ENCODE measurements at regions of chr11 and their contacts with region 1.

Region 1: DNA sequence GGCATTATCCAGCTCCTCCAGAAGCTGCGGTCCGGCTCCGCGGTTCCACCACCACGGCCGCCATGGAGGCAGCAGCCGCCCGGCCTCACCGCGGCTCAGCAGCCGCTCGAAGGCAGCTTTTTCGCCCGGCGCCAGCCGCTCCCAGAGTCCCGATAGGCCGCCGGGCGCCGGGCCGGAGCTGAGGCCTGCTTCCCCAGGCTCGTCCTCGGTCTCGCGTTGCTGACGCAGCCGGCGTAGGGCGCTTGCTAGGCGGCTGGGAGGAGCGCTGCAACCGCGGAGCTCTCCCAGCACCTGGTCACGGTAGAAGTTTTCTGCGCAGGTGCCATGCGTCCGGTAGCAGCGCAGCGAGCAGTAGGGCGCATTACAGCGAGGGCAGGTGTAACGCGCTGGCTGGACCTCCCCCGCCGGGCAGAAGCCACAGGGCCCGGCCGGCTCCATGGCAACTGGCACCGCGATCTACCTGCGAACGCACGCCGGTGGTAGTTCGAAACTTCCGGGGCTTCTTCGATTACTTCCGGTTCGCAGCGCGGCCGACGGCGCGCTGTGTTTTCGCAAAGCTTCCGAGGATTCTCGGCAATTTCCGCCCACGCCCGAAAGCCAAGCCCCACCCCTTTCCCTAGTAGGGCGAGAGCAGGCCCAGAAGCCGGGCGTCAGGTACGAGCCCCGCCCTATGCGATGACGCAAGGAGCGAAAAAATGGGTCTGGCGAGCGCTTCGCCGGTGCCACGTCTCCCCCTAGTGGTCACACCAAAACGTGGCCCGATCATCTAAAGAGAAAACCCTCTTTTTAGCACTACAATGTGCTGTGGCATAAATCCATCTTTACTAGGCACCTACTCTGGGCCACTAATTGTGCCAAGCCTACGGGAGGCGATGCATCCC is at the start of gene ZNHIT2:
- DNase-seq: peak; percentile 96 to 100 (median 100)
- ATAC-seq: peak; percentile 60 to 66
- H3K4me3 Mint-ChIP-seq: peak within 1 kb of the TSS; percentile 87 to 94 (median 90)
- H3K27ac Mint-ChIP-seq: peak within 1 kb of the TSS; percentile 82 to 99 (median 97)
- H3K4me1 Mint-ChIP-seq: peaks cover 24 to 71% (median 51%) of the 10 kb centered on the region in 4 donors
- H3K27me3 Mint-ChIP-seq: no peaks in the 10 kb centered on the region
- polyA plus RNA-seq, gene ZNHIT2: 24.3 to 33.1 (median 29.8) TPM

Region 2: DNA sequence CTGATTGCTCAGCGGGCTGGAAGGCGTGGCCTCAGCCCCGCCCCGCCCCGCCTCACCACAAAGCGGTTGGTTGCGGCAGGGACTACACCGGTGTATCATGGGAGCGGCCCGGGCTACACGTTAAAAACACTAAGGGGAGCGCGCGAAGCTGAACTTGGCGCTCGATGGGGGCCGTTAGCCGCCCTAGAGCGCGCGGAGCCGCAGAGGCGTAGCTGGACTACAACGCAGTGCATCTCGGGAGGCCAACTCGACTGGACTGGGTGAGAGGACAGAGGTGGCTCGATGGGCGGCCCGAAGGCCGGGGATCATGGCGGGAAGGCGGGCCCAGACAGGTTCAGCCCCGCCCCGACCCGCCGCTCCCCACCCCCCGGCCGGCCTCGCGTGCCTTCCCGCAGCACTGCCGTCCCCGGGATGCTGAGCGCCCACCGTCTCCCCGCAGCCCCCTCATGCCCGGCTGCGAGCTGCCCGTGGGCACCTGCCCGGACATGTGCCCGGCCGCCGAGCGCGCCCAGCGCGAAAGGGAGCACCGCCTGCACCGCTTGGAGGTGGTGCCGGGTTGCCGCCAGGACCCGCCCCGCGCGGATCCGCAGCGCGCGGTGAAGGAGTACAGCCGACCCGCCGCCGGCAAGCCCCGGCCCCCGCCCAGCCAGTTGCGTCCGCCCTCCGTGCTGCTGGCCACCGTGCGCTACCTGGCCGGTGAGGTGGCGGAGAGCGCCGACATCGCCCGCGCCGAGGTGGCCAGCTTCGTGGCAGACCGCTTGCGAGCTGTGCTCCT is 76.4 kb before region 1 on chr11 and contains the start of gene SAC3D1:
- POLR2A ChIA-PET with region 1: interaction called, 12 read pairs
- DNase-seq: peak; percentile 75 to 92 (median 85)
- ATAC-seq: peak; percentile 91 to 92
- H3K4me3 Mint-ChIP-seq: peak within 1 kb of the TSS; percentile 90 to 96 (median 93)
- H3K27ac Mint-ChIP-seq: peak within 1 kb of the TSS; percentile 78 to 95 (median 92)
- H3K4me1 Mint-ChIP-seq: peaks cover 5 to 27% (median 19%) of the 10 kb centered on the region in 4 donors
- H3K27me3 Mint-ChIP-seq: no peaks in the 10 kb centered on the region
- polyA plus RNA-seq, gene SAC3D1: 6.7 to 13.9 (median 10.7) TPM

Region 3: GRCh38 chr11:65095974-65096806 is 21.3 kb before region 1 on chr11 and contains the start of gene VPS51:
- POLR2A ChIA-PET with region 1: interaction called, 115 read pairs
- DNase-seq: peak; percentile 65 to 93 (median 87)
- ATAC-seq: peak; percentile 88 to 90
- H3K4me3 Mint-ChIP-seq: peak within 1 kb of the TSS; percentile 77 to 96 (median 90)
- H3K27ac Mint-ChIP-seq: peak within 1 kb of the TSS; percentile 88 to 98 (median 96)
- H3K4me1 Mint-ChIP-seq: peaks cover 5 to 25% (median 13%) of the 10 kb centered on the region in 4 donors
- H3K27me3 Mint-ChIP-seq: no peaks in the 10 kb centered on the region
- polyA plus RNA-seq, gene VPS51: 70.2 to 111 (median 106) TPM

Region 4: GRCh38 chr11:65169164-65169641 is 51.7 kb after region 1 on chr11:
- POLR2A ChIA-PET with region 1: no interaction called
- DNase-seq: no peak
- ATAC-seq: no peak
- H3K4me3 Mint-ChIP-seq: no peak overlapping the region
- H3K27ac Mint-ChIP-seq: peak overlapping the region in 5 of 10 donors; percentile 47 to 71 (median 63)
- H3K4me1 Mint-ChIP-seq: peaks cover 0 to 10% (median under 1%) of the 10 kb centered on the region in 4 donors
- H3K27me3 Mint-ChIP-seq: no peaks in the 10 kb centered on the region

Region 5: DNA sequence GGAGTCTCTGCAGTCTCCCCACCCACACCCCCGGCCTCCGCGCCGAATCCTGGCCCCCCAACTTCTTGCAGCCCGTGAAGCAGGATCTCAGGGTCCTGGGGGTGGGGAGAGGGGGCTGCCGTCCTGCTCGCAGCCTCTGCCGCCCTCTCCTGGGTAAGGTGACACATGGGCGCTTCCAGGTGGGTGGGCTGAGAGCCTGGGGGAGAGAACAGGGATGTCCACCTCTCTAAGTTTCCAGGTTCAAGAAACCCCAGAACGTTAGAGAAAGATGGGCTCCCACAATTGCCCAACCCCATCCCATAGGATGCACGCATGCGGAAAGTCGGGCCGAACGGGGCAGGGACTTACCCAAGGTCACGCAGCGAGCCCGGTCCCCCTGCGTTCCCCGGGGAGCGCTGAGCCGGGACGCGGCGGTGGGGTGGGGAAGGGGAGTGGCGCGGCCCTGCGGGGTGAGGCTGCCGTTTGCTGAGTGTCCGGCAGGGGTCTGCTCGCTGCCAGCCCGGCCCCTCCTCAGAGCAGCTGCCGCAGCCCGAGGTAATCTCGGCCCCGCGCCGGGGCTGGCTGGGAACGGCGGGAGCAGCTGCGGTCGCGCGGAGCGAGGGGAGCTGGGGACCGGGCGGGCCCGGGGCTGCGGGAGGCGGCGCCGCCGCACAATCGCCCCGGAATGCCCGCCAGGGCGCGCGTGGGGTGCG is 63.6 kb after region 1 on chr11:
- POLR2A ChIA-PET with region 1: interaction called, 22 read pairs
- DNase-seq: peak; percentile 36 to 77 (median 55)
- ATAC-seq: peak; percentile 75 to 82
- H3K4me3 Mint-ChIP-seq: peak overlapping the region; percentile 85 to 96 (median 89)
- H3K27ac Mint-ChIP-seq: peak overlapping the region; percentile 75 to 92 (median 86)
- H3K4me1 Mint-ChIP-seq: peaks cover 9 to 34% (median 27%) of the 10 kb centered on the region in 4 donors
- H3K27me3 Mint-ChIP-seq: no peaks in the 10 kb centered on the region